ENCODE measurements at regions of chr11 and their contacts with region 1.

Region 1: GRCh38 chr11:35822815-35823495 is 120.9 kb upstream of the LDLRAD3 start:
- DNase-seq: no peak
- H3K4me3 Mint-ChIP-seq: no peak overlapping the region
- H3K27ac Mint-ChIP-seq: no peak overlapping the region
- H3K4me1 Mint-ChIP-seq: peaks cover 11% of the 10 kb centered on the region
- H3K27me3 Mint-ChIP-seq: no peaks in the 10 kb centered on the region

Region 2: GRCh38 chr11:35260342-35260985 is 562.5 kb before region 1 on chr11:
- CTCF ChIA-PET with region 1: no interaction called
- intact Hi-C with region 1: no loop called
- DNase-seq: no peak
- H3K4me3 Mint-ChIP-seq: no peak overlapping the region
- H3K27ac Mint-ChIP-seq: no peak overlapping the region
- H3K4me1 Mint-ChIP-seq: peaks cover 19% of the 10 kb centered on the region
- H3K27me3 Mint-ChIP-seq: no peaks in the 10 kb centered on the region

Region 3: DNA sequence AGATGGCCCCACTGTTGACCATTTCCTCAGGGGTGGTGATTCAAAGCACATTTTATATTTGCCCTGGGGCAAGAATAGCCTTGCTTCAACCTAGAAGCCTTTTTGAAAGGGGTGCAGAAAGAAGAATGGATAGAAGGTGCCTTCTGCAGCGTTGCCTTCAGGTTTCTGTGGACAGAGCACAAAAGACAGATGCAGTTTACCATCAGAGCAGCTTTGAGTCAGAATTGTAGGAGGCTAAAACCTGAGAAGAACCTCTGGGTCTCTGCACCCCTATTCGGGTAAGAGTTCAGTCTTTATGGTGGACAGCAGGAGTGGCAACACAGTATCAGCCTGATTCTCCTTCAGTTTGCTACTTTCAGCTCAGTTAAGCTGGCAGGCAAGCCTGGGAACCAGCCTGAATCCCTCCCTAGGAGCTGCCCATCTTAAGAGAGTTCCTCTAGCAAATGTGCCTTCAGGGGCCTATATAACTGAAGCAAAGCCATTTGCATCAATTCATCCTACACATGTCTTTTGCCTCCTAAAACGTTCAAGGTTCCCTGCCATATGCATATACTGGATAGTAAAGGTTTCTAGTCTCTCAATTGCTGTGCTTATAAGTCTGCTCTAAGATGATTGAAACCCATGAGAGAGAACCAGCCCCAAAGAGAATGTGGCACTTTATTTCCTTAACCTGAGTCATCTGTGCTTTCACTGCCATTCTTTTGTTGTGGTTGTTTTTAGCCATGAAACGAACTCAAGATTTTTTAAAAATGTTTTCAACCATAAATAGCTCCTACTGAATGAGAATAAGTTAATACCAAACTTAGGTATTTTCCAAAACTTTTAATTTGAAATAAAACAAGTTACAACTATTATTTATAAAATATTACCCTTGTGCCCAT is 37.4 kb before region 1 on chr11:
- CTCF ChIA-PET with region 1: interaction called, 5 read pairs
- intact Hi-C with region 1: loop called (anchors 2 kb)
- DNase-seq: peak; percentile 10
- H3K4me3 Mint-ChIP-seq: no peak overlapping the region
- H3K27ac Mint-ChIP-seq: no peak overlapping the region
- H3K4me1 Mint-ChIP-seq: peaks cover 48% of the 10 kb centered on the region
- H3K27me3 Mint-ChIP-seq: no peaks in the 10 kb centered on the region

Region 4: DNA sequence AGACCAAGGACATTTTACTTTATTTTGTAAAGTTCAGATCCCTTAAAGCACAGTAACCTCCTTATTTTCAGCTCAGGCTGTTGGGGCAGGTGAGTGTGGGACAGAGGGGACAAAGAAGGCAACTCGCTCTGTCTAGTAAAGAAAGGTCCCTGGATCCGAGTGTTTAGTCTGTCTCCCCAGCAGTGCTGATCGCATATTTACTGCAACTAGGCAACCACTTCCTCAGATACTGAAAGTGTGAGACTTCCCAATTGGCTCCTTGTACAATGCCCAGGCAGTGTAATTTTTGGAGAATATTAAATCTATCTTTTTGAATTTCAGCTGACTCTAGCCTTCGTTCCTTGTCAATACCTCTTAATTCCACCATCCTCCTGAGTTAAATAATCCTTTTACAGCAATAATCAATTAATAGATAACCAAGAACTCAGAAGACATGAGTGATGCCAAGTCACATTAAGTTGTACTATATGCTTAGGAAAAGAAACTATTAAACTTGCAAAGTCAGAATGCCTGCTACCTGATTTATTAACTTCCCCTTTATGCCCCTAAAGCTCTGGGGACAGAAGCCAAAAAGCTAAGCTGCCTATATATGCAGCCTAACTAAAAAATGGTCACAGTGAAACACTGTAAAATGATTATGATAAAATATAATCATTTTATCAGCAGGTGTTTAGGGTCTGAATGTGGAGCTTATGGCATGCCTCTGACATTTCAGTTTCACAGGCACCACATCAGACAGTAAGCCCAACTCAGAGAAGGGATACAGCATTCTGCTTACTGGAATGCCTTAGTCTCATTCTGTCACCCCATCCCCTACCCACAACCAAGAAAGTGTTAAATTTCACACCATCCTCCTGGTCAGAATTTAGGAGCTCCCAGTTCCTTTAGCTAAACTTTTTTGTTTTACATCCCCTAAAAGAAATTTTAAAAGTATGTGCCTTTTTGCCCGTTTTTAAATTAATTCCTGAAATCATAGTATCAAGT is 21.7 kb before region 1 on chr11:
- CTCF ChIA-PET with region 1: interaction called, 17 read pairs
- intact Hi-C with region 1: no loop called
- DNase-seq: no peak
- H3K4me3 Mint-ChIP-seq: no peak overlapping the region
- H3K27ac Mint-ChIP-seq: no peak overlapping the region
- H3K4me1 Mint-ChIP-seq: peaks cover 4% of the 10 kb centered on the region
- H3K27me3 Mint-ChIP-seq: no peaks in the 10 kb centered on the region

Region 5: DNA sequence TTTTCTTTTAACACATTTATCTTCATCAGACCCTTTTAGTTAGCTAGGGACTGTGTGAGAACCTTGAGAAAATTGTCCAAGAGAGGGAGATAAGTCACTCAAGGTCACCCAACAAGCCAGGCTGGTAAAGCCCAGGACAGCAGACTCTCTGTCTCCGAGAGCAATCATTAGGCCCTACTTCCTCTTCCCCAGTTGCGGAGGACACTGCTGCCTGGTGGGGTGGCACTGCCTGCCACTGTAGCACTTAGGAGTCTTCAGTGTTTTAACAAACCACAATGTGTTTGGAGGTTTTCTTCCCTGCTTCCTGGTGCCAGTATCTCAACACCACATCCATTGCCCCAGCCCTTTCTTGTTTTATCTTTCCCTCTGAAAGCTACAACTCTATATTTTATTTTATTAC is 11.2 kb before region 1 on chr11:
- CTCF ChIA-PET with region 1: interaction called, 17 read pairs
- intact Hi-C with region 1: no loop called
- DNase-seq: no peak
- H3K4me3 Mint-ChIP-seq: no peak overlapping the region
- H3K27ac Mint-ChIP-seq: no peak overlapping the region
- H3K4me1 Mint-ChIP-seq: no peaks in the 10 kb centered on the region
- H3K27me3 Mint-ChIP-seq: no peaks in the 10 kb centered on the region

Region 6: DNA sequence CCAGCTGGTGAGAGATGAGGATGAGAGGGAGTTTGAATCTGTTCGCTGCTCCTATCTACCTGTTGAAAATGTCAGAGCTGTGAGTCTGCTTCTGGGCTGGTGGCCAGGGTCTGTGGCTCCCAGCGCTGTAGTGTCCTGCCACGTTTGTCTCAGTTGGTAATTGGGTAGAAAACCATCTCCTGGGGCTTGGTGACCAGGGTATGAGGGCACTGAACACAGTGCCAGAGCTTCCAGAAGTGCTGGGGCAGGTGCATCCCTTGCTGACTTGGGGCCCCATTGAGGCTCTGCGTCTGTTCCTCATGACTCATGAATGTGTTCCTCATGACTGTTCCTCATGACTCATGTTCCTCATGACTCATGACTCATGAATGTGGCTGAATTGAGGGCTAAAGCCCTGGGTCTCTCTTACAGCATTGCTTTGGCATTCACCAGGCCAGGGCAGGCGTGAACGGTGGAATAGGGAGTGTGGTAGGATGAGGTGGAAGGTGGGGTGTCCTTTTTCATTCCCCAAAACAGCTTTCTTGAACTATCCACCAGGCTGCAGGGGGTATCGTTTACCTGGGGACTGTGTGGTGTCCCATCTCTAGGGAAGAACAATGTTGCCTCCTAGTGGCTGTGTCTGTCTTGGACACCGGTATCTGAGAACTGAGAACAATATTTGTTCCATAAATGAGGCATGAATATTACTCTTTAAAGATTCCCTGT is 326.7 kb after region 1 on chr11:
- CTCF ChIA-PET with region 1: interaction called, 3 read pairs
- intact Hi-C with region 1: loop called (anchors 1 kb)
- DNase-seq: peak; percentile 68
- H3K4me3 Mint-ChIP-seq: no peak overlapping the region
- H3K27ac Mint-ChIP-seq: no peak overlapping the region
- H3K4me1 Mint-ChIP-seq: peaks cover 13% of the 10 kb centered on the region
- H3K27me3 Mint-ChIP-seq: peaks cover 20% of the 10 kb centered on the region

Region 7: GRCh38 chr11:36258730-36259360 is 435.9 kb after region 1 on chr11:
- CTCF ChIA-PET with region 1: interaction called, 3 read pairs
- intact Hi-C with region 1: loop called (anchors 2 kb)
- DNase-seq: peak; percentile 51
- H3K4me3 Mint-ChIP-seq: no peak overlapping the region
- H3K27ac Mint-ChIP-seq: no peak overlapping the region
- H3K4me1 Mint-ChIP-seq: no peaks in the 10 kb centered on the region
- H3K27me3 Mint-ChIP-seq: peaks cover 27% of the 10 kb centered on the region

Region 8: GRCh38 chr11:36265793-36266628 is 443.1 kb after region 1 on chr11:
- CTCF ChIA-PET with region 1: interaction called, 22 read pairs
- intact Hi-C with region 1: loop called (anchors 1 kb)
- DNase-seq: peak; percentile 74
- H3K4me3 Mint-ChIP-seq: no peak overlapping the region
- H3K27ac Mint-ChIP-seq: no peak overlapping the region
- H3K4me1 Mint-ChIP-seq: no peaks in the 10 kb centered on the region
- H3K27me3 Mint-ChIP-seq: peaks cover 1% of the 10 kb centered on the region